Mammary epithelial cell (primary cell): ENCODE measurements at regions of chr5 and their contacts with region 1.

Region 1: DNA sequence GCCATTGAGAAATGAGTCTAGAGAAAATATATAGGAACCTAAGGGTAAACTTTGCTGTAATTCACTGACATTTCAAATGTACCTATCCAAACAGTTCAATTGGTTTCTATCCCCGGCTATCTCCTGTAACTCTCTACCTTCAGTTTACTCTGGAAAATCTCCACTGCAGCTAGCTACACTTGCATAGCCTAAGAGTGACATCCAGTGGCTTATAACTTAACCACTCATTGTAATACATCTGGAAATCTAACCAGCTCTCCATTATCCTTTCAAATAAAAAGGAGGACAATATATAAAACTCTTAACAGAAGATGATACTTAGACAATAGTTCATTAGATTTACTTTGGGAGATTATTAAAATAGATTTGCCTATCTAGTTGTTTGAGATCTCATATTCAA is 35.3 kb upstream of the SPDL1 start:
- DNase-seq: peak; percentile 38
- H3K4me3 ChIP-seq: no peak overlapping the region
- H3K27ac ChIP-seq: no peak overlapping the region
- H3K4me1 ChIP-seq: no peaks in the 10 kb centered on the region
- H3K27me3 ChIP-seq: no peaks in the 10 kb centered on the region
- CTCF ChIP-seq: peak; percentile 58 to 66

Region 2: DNA sequence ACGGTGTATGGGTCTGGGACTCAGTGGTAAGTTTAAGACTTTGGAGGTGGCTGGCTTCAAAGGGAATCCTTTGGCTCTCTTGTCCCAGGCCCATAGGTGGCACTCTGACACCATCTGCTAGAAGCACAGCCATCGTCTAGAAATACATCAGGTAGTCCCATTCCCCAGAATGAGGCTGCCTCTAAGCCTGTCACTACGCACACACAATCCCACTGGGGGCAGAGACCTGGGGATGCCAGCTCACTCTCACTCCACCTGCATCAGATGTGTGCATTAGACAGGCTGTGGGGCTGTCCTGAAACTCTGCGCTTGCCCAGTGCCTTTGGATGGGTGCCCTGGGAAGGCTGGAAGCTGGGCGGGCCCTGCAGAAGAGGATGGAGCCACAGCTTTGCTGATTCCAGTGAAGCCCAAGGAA is 841.7 kb before region 1 on chr5:
- CTCF ChIA-PET with region 1: no interaction called
- dilution Hi-C with region 1: no loop called
- in situ Hi-C with region 1: no loop called
- intact Hi-C with region 1: loop called (anchors 1 kb)
- DNase-seq: peak; percentile 23
- H3K4me3 ChIP-seq: no peak overlapping the region
- H3K27ac ChIP-seq: no peak overlapping the region
- H3K4me1 ChIP-seq: no peaks in the 10 kb centered on the region
- H3K27me3 ChIP-seq: no peaks in the 10 kb centered on the region
- CTCF ChIP-seq: peak; percentile 48 to 86

Region 3: DNA sequence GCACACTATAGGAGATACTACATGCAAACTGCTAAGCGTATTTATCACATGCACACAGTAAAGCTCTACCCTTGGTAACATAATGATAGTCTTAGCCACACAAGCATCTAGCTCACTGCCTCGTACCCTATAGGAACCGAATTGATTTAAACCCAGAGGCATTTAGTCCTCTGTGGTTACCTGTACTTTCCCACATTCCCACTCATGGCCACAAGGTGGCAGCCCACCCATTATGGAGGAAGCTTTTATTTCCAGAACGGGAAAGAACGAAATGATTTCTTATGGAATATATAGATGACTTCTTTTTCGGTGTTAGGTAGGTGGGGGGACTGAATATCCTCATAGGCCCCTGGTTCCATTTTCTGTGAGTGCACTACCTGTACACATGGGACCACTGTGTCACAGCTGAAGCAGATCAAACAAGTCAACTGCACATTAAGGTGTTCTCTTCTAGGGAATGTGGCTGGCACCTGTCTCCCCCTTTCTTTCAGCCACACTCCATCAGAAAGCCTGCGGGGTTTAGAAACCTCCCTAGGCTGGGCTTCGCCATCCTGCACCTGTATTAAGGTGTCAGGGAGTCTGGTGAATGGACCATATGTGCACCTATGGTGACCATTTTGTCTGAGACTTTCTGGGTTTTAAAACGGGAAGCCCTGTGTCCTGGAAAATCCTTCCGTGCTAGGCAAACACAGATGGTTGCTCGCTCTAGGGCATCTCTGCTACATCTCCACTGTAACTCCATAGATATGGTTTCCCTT is 560.6 kb before region 1 on chr5:
- CTCF ChIA-PET with region 1: no interaction called
- dilution Hi-C with region 1: no loop called
- in situ Hi-C with region 1: loop called (anchors 10 kb)
- intact Hi-C with region 1: loop called (anchors 1 kb)
- DNase-seq: peak; percentile 55
- H3K4me3 ChIP-seq: no peak overlapping the region
- H3K27ac ChIP-seq: no peak overlapping the region
- H3K4me1 ChIP-seq: peaks cover 14% of the 10 kb centered on the region
- H3K27me3 ChIP-seq: no peaks in the 10 kb centered on the region
- CTCF ChIP-seq: peak; percentile 86 to 88

Region 4: GRCh38 chr5:169268019-169268418 is 280.3 kb before region 1 on chr5:
- CTCF ChIA-PET with region 1: no interaction called
- dilution Hi-C with region 1: no loop called
- in situ Hi-C with region 1: no loop called
- intact Hi-C with region 1: loop called (anchors 2 kb)
- DNase-seq: peak; percentile 55
- H3K4me3 ChIP-seq: no peak overlapping the region
- H3K27ac ChIP-seq: no peak overlapping the region
- H3K4me1 ChIP-seq: peaks cover 12% of the 10 kb centered on the region
- H3K27me3 ChIP-seq: no peaks in the 10 kb centered on the region
- CTCF ChIP-seq: no peak

Region 5: GRCh38 chr5:169325273-169325672 is 223.0 kb before region 1 on chr5:
- CTCF ChIA-PET with region 1: no interaction called
- dilution Hi-C with region 1: no loop called
- in situ Hi-C with region 1: no loop called
- intact Hi-C with region 1: no loop called
- DNase-seq: no peak
- H3K4me3 ChIP-seq: no peak overlapping the region
- H3K27ac ChIP-seq: no peak overlapping the region
- H3K4me1 ChIP-seq: no peaks in the 10 kb centered on the region
- H3K27me3 ChIP-seq: no peaks in the 10 kb centered on the region
- CTCF ChIP-seq: no peak

Region 6: DNA sequence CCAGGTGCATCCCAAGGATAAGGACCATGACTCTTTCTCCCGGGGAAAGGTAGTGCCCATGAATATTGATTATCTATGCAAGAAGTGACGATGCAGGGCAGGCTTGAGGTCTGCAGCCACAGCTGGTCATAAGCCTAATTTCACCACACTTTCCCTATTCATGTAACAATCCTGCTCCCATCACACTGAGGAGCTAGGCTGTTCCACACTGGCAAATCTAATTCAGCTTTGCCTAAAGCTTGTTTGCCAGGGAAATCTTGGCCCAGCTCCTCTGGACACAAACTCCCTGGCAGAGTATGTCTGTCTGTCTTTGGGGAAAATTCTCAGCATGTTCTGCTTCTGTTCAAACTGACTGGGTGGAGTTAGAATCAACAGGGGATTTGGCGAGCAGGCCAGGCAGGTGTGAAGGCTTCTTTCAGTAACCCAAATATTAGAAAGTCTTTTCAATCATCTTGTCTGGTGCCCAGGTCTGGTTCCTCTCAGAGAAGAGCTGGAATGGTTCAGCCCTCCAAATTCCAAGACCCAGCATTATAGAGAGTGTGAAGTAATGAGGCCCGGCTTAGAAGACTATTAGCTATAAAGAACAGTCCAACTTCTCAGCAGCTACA is 53.3 kb before region 1 on chr5:
- CTCF ChIA-PET with region 1: no interaction called
- dilution Hi-C with region 1: loop called (anchors 5 kb)
- in situ Hi-C with region 1: no loop called
- intact Hi-C with region 1: no loop called
- DNase-seq: no peak
- H3K4me3 ChIP-seq: no peak overlapping the region
- H3K27ac ChIP-seq: no peak overlapping the region
- H3K4me1 ChIP-seq: no peaks in the 10 kb centered on the region
- H3K27me3 ChIP-seq: no peaks in the 10 kb centered on the region
- CTCF ChIP-seq: no peak